PC-9 (cell line): ENCODE measurements at regions of chr10 and their contacts with region 1.

Region 1: GRCh38 chr10:4947635-4948596 is 15.3 kb upstream of the AKR1C1 start:
- DNase-seq: peak in 1 of 2 experiments; percentile 93
- H3K4me3 ChIP-seq: no peak overlapping the region
- H3K27ac ChIP-seq: peak overlapping the region; percentile 97
- H3K4me1 ChIP-seq: peaks cover 51% of the 10 kb centered on the region
- H3K27me3 ChIP-seq: no peaks in the 10 kb centered on the region
- CTCF ChIP-seq: no peak

Region 2: DNA sequence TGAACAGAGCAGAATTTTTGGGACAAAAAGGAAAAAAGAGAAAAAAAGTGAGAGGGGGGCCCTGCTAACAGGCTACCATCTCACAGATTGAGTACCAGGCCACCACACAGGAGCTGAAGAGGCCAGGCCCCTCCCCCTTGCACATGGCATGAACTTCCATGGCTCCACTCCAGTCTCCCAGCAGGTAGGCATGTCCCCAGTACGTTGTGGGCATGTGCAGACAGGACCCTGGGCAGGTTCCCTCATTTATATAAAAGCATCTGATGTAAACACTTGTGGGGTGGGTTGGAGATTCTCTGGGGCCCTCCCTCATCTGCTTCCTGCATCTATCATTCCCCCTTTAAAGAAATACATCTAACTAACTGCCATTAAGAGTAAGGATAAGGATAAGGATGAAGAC is 29.7 kb before region 1 on chr10:
- CTCF ChIA-PET with region 1: no interaction called
- POLR2A ChIA-PET with region 1: interaction called, 10 read pairs
- intact Hi-C with region 1: no loop called
- DNase-seq: no peak
- H3K4me3 ChIP-seq: no peak overlapping the region
- H3K27ac ChIP-seq: no peak overlapping the region
- H3K4me1 ChIP-seq: no peaks in the 10 kb centered on the region
- H3K27me3 ChIP-seq: no peaks in the 10 kb centered on the region
- CTCF ChIP-seq: no peak

Region 3: DNA sequence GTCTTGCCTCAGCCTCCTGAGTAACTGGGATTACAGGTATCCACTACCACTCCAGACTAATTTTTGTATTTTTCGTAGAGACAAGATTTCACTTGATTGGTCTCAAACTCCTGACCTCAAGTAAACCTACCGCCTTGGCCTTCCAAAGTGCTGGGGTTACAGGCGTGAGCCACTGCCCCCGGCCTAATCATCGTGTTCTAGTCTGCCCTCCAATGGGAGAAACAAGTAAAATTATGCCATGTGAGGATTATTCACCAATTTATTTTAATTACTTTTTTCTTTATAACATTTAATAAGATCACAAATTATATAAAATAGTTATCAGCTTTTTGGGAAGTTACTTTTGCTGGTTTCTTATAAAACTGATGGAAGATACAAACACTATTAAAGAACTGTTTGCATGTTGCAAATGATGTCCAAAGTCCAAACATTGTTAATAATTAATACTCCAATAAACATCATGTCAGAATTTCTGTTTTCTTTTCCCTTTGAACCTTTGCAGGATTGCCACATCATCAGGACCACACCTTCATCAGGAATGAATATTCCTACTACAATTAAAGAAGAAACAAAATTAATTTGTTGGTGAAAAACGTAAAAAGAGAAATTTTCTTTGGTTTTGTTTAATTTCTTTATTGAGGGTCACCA is 247.9 kb after region 1 on chr10:
- CTCF ChIA-PET with region 1: no interaction called
- POLR2A ChIA-PET with region 1: no interaction called
- intact Hi-C with region 1: no loop called
- DNase-seq: no peak
- H3K4me3 ChIP-seq: no peak overlapping the region
- H3K27ac ChIP-seq: no peak overlapping the region
- H3K4me1 ChIP-seq: no peaks in the 10 kb centered on the region
- H3K27me3 ChIP-seq: no peaks in the 10 kb centered on the region
- CTCF ChIP-seq: no peak